PC-9 (cell line): ENCODE measurements at regions of chr12 and their contacts with region 1.

Region 1: DNA sequence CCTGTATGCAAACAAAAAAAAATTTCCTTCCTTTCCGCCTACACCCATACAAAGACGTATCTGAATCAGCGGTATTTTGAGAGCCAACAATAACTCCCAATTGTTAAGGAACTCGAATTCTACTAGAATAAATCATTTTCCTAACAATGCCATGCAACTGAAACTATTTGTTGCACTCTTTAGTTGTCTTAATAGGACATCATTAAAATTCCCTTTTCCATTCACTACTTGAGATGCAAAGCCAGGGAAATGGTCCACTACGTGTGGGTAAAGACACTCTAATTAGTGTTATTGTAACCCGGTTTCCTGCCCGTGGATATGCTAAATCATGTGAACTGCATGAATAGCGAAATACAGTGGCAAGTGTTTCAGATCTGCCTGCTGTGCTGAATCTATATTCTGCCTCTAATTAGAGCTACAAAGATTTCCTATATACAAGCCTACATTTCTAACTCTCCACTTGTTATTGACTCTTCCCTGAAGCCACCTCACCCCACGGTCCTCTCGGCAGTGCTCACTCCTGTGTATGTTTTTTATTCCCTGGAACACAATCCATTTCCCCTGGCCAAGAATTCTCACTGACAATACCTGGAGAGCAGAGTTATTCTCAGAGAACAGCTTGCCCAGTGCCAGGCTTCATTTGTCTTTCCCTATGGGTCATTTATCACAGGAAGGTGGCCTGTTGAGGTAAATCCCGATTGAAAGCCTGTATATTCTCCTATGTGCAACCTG is 168.3 kb downstream of the PAWR start:
- DNase-seq: no peak
- H3K4me3 ChIP-seq: no peak overlapping the region
- H3K27ac ChIP-seq: no peak overlapping the region
- H3K4me1 ChIP-seq: no peaks in the 10 kb centered on the region
- H3K27me3 ChIP-seq: no peaks in the 10 kb centered on the region
- CTCF ChIP-seq: no peak

Region 2: DNA sequence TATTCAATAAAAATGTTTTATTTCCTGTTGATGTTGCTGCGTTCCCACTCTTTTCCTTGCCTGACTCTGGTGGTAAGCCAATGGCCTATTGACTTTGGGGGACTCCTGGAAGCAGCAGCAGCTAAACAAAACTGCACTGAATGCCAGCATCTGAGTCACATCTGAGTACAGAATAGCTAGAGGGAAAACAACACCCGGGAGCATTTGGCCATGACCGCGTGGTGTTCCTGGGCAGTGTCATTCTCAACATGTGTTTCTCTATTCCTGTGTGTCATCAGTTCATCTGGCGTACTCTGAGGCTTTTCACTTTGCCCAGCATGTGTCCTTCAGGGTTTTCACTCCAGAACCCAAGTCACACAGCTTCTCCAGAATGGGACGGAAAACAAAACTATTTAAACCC is 70.4 kb before region 1 on chr12:
- CTCF ChIA-PET with region 1: no interaction called
- POLR2A ChIA-PET with region 1: interaction called, 20 read pairs
- intact Hi-C with region 1: no loop called
- DNase-seq: peak; percentile 55 to 66
- H3K4me3 ChIP-seq: no peak overlapping the region
- H3K27ac ChIP-seq: no peak overlapping the region
- H3K4me1 ChIP-seq: no peaks in the 10 kb centered on the region
- H3K27me3 ChIP-seq: no peaks in the 10 kb centered on the region
- CTCF ChIP-seq: no peak

Region 3: GRCh38 chr12:79547044-79547734 is 24.8 kb after region 1 on chr12:
- CTCF ChIA-PET with region 1: no interaction called
- POLR2A ChIA-PET with region 1: no interaction called
- intact Hi-C with region 1: no loop called
- DNase-seq: peak; percentile 88 to 99
- H3K4me3 ChIP-seq: peak overlapping the region; percentile 15; the same call in 1 of the 2 replicates
- H3K27ac ChIP-seq: peak overlapping the region; percentile 99
- H3K4me1 ChIP-seq: peaks cover 70% of the 10 kb centered on the region
- H3K27me3 ChIP-seq: no peaks in the 10 kb centered on the region
- CTCF ChIP-seq: no peak